H1 (cell line): ENCODE measurements at regions of chr14 and their contacts with region 1.

Region 1: GRCh38 chr14:79842270-79842669 is 369.0 kb downstream of the DIO2 start:
- DNase-seq: no peak
- H3K4me3 ChIP-seq: no peak overlapping the region
- H3K27ac ChIP-seq: no peak overlapping the region
- H3K4me1 ChIP-seq: no peaks in the 10 kb centered on the region
- H3K27me3 ChIP-seq: no peaks in the 10 kb centered on the region
- CTCF ChIP-seq: no peak
- EP300 ChIP-seq: no peak
- POLR2A ChIP-seq: no peak
- RAD21 ChIP-seq: no peak

Region 2: DNA sequence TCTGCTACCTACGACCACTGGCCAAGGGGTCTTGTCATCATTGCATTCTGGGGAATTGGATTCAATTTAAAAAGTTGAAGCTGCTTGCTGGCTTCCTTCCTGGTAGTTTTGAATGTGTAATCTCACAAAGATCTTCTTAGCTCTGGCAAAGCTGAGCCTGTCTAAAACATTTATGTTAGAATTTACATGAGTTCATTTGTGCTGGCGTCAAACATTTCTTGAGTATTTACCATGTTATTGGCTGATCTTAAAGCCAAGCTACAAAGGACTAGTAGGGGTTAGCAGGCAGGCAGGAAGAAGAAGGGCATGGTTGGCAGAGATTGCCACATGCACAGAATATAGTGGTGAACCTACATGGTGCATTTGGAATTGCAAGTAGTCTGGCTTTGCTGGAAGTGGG is 75.8 kb before region 1 on chr14:
- CTCF ChIA-PET with region 1: no interaction called
- POLR2A ChIA-PET with region 1: no interaction called
- DNase-seq: no peak
- H3K4me3 ChIP-seq: no peak overlapping the region
- H3K27ac ChIP-seq: no peak overlapping the region
- H3K4me1 ChIP-seq: no peaks in the 10 kb centered on the region
- H3K27me3 ChIP-seq: no peaks in the 10 kb centered on the region
- CTCF ChIP-seq: no peak
- EP300 ChIP-seq: no peak
- POLR2A ChIP-seq: no peak
- RAD21 ChIP-seq: no peak

Region 3: DNA sequence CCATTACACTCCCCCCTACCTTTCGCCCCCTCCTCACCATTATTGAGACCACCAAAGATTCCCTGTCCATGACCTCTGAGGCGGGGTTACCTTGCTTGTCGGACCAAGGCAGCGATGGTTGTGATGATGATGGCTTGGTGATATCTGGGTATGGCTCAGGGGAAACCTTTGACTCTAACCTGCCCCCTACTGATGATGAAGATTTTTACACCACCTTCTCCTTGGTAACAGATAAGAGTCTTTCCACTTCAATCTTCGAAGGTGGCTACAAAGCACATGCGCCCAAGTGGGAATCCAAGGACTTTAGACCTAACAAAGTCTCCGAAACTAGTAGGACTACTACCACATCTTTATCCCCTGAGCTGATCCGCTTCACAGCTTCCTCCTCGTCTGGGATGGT is 18.8 kb after region 1 on chr14:
- CTCF ChIA-PET with region 1: interaction called, 19 read pairs
- POLR2A ChIA-PET with region 1: no interaction called
- DNase-seq: peak in 1 of 2 experiments; percentile 48
- H3K4me3 ChIP-seq: no peak overlapping the region
- H3K27ac ChIP-seq: no peak overlapping the region
- H3K4me1 ChIP-seq: no peaks in the 10 kb centered on the region
- H3K27me3 ChIP-seq: no peaks in the 10 kb centered on the region
- CTCF ChIP-seq: peak; percentile 34 to 59 (median 55)
- EP300 ChIP-seq: no peak
- POLR2A ChIP-seq: no peak
- RAD21 ChIP-seq: peak; percentile 73 to 79